ENCODE measurements at regions of chr4 and their contacts with region 1.

Region 1: GRCh38 chr4:77065382-77065781 is 10.4 kb downstream of the CCNI start:
- DNase-seq: no peak
- ATAC-seq: no peak
- H3K4me3 Mint-ChIP-seq: no peak overlapping the region
- H3K27ac Mint-ChIP-seq: peak overlapping the region; percentile 20
- H3K4me1 Mint-ChIP-seq: peaks cover 36% of the 10 kb centered on the region
- H3K27me3 Mint-ChIP-seq: no peaks in the 10 kb centered on the region
- CTCF ChIP-seq: no peak

Region 2: DNA sequence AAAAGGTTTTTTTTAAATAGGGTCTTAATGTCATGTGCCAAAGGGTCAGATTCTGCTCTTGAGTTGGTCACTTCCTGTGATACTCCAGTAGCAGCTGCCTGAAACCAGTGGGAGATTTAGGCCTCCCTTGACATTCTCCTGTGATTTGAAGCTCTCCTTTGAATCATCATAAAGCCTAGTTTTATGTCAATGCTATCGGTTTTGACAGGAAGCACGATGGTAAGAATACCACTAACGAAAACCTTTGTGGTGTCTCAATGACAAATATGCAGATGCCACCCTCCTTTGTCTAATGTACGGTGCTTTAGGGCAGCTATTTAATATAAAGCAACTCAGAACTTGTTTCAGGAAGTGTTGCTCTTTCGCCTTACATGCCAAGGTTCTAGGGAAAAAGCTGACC is 33.8 kb before region 1 on chr4:
- CTCF ChIA-PET with region 1: no interaction called
- POLR2A ChIA-PET with region 1: no interaction called
- intact Hi-C with region 1: no loop called
- DNase-seq: peak; percentile 47
- ATAC-seq: peak; percentile 72
- H3K4me3 Mint-ChIP-seq: no peak overlapping the region
- H3K27ac Mint-ChIP-seq: no peak overlapping the region
- H3K4me1 Mint-ChIP-seq: peaks cover 43% of the 10 kb centered on the region
- H3K27me3 Mint-ChIP-seq: no peaks in the 10 kb centered on the region
- CTCF ChIP-seq: no peak

Region 3: DNA sequence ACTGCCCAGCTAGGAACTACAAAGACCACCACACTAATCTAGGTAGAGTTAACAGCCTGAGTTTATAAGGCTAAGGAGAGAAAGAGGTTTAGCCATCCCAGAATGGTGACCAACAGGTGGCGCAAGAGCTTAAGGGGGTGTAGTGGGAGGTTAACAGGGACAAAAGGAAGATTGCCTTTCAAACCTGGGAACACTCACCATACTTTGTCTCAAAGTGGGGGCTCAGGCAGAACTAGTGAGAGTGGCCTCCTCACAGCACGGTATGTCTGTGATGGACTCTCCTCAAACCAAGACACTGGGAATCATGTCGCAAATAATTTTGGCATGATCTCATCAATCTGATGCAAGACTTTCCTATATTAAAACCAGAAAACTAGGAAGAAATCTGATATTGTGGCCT is 13.0 kb before region 1 on chr4:
- CTCF ChIA-PET with region 1: interaction called, 13 read pairs
- POLR2A ChIA-PET with region 1: interaction called, 3 read pairs
- intact Hi-C with region 1: no loop called
- DNase-seq: peak; percentile 73
- ATAC-seq: peak; percentile 39
- H3K4me3 Mint-ChIP-seq: no peak overlapping the region
- H3K27ac Mint-ChIP-seq: peak overlapping the region; percentile 80
- H3K4me1 Mint-ChIP-seq: peaks cover 11% of the 10 kb centered on the region
- H3K27me3 Mint-ChIP-seq: no peaks in the 10 kb centered on the region
- CTCF ChIP-seq: peak; percentile 60

Region 4: DNA sequence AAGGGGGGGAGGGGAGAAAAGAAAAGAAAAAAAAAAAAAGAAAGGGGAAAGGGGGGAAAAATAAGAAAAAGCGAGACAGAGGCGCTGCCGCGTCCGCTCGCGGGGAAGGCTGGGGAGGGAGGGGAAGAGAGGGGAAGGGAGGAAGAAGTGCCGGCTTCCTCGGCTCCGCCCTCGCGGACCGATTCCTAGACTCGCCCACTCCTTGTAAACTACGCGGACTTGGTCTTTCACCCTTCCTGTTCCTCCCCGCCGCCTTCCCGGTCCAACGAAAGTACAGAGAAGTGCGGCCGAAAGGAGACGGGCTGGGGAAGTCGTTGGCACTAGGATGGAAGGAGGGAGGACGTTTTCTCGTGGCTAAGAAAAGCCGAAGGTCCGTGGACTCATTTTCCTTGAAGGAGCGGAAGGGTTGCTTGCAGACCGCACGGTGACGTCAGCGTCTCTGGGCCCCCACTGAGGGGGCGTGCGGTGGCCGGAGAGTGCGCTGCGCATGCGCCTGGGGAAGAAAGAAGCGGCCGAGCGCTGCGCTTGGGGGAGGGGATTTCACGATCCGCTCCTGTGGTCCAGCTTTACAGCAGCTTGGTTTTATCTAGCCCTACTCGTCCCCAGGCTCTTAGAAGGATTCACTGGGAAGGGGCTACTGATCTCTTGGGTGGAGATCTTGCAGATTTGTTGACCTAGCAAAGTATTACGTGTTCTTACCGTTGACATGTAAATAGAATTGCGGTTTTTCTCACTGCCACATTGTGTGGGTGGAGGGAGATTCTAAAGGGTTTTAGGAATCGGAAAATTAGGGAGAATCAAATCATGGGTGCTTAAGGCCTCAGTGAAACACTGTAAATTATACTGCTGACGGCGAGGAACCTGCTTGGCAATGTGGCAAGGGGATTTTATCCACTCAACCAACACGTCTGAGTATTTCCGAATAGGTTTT is 10.8 kb after region 1 on chr4 and contains the start of gene CCNI:
- CTCF ChIA-PET with region 1: interaction called, 4 read pairs
- POLR2A ChIA-PET with region 1: interaction called, 13 read pairs
- intact Hi-C with region 1: no loop called
- DNase-seq: peak; percentile 92
- ATAC-seq: peak; percentile 77
- H3K4me3 Mint-ChIP-seq: no peak within 1 kb of the TSS
- H3K27ac Mint-ChIP-seq: peak within 1 kb of the TSS; percentile 100
- H3K4me1 Mint-ChIP-seq: peaks cover 36% of the 10 kb centered on the region
- H3K27me3 Mint-ChIP-seq: no peaks in the 10 kb centered on the region
- CTCF ChIP-seq: no peak
- total RNA-seq, gene CCNI: 257 to 272 TPM

Region 5: DNA sequence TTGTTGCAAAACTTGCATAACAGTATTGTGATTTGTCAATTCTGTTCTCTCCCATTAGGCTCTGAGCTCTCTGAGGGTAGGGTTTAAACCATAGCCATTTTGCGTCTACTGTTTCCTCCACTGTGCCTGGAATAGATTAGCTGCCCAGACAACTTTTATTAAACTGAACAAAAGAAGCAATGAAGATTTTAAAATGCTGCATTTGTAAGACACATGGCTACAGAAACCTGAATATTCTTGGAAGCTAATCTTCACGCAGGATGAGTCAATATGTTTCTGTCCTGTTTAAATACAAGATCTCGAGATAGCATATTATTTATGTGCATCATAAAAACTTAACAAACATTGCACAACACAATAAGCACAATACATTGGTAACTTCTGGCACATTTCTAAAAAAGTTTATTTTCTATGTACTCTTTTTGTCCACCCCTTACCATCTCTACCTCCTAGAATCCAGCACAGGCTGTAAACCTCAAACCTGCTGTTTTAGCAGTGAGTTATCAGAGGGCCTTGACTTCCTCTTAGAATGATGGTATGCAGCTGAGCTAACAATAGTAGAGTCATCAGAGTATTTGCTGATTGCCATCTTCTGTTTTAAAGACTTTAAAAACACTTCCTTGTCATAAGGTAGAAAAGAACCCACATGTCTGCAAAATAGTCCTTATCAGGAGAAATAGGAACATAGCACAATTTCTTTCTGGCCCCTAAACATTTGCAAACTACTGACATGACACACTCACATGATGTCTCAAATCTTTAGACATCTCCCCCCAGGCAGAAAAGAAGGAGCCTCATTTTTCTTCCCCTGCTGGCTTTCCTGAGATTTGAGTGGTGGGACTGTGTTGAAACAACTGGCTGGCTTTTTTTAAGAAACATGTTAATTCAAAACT is 81.0 kb after region 1 on chr4:
- CTCF ChIA-PET with region 1: no interaction called
- POLR2A ChIA-PET with region 1: no interaction called
- intact Hi-C with region 1: no loop called
- DNase-seq: no peak
- ATAC-seq: peak; percentile 53
- H3K4me3 Mint-ChIP-seq: no peak overlapping the region
- H3K27ac Mint-ChIP-seq: peak overlapping the region; percentile 74
- H3K4me1 Mint-ChIP-seq: peaks cover 16% of the 10 kb centered on the region
- H3K27me3 Mint-ChIP-seq: no peaks in the 10 kb centered on the region
- CTCF ChIP-seq: no peak

Region 6: GRCh38 chr4:77613267-77613666 is 547.9 kb after region 1 on chr4:
- CTCF ChIA-PET with region 1: no interaction called
- POLR2A ChIA-PET with region 1: no interaction called
- intact Hi-C with region 1: no loop called
- DNase-seq: no peak
- ATAC-seq: no peak
- H3K4me3 Mint-ChIP-seq: no peak overlapping the region
- H3K27ac Mint-ChIP-seq: no peak overlapping the region
- H3K4me1 Mint-ChIP-seq: no peaks in the 10 kb centered on the region
- H3K27me3 Mint-ChIP-seq: peaks cover 8% of the 10 kb centered on the region
- CTCF ChIP-seq: no peak